ENCODE measurements at regions of chr3 and their contacts with region 1.

Region 1: GRCh38 chr3:4850928-4851265 is 128.3 kb upstream of the BHLHE40 start:
- DNase-seq: peak in 1 of 2 donors; percentile 84
- ATAC-seq: peak; percentile 82 to 86 (median 83)
- H3K4me3 ChIP-seq: no peak overlapping the region
- H3K4me3 Mint-ChIP-seq: peak overlapping the region; percentile 42
- H3K27ac ChIP-seq: peak overlapping the region; percentile 98
- H3K27ac Mint-ChIP-seq: peak overlapping the region; percentile 79 to 96
- H3K4me1 ChIP-seq: peaks cover 39% of the 10 kb centered on the region
- H3K4me1 Mint-ChIP-seq: peaks cover 72 to 75% of the 10 kb centered on the region in 2 donors
- H3K27me3 ChIP-seq: no peaks in the 10 kb centered on the region
- H3K27me3 Mint-ChIP-seq: no peaks in the 10 kb centered on the region
- CTCF ChIP-seq: no peak

Region 2: DNA sequence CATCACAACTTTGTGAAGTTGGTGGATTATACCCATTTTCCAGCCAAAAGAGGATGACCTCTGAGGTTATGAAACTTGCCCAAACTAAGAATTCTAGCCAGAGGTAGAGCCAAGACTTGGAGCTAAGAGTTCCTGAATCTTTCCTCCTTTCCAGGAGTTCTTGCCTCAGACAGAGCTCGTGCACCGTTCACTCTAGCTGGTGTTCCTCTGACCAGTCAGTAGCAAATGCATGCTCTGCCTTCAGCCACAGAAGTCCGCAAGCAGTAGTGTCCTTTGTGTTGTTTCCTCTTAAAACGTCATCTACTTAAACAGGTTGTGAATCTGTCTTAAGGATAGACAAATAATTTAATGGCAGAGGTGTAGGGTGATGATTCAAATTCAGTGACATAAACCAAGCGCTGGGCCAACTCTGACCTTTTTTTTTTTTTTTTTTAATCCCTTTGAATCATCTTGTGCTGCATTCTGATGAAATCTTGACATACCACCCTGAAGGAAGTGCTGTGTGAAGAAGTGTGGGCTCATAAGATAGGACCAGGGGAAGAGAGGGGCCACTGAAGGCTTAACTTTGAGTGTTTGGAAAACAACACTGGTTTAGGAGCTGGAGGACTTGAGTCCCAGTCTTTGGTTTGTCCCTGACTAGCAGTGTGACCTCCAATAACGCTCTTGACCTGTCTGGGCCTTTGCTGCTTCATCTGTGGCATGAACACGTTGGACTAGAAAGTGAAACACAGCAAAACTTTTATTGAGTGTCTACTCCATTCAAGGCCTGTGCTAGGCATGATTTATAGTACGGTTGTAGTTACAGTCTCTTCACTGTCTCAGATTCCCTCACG is 304.3 kb before region 1 on chr3:
- intact Hi-C with region 1: no loop called
- DNase-seq: no peak
- ATAC-seq: no peak
- H3K4me3 ChIP-seq: no peak overlapping the region
- H3K4me3 Mint-ChIP-seq: no peak overlapping the region
- H3K27ac ChIP-seq: no peak overlapping the region
- H3K27ac Mint-ChIP-seq: no peak overlapping the region
- H3K4me1 ChIP-seq: no peaks in the 10 kb centered on the region
- H3K4me1 Mint-ChIP-seq: peaks cover 28 to 31% of the 10 kb centered on the region in 2 donors
- H3K27me3 ChIP-seq: no peaks in the 10 kb centered on the region
- H3K27me3 Mint-ChIP-seq: no peaks in the 10 kb centered on the region
- CTCF ChIP-seq: no peak

Region 3: GRCh38 chr3:4821975-4822374 is 28.9 kb before region 1 on chr3:
- intact Hi-C with region 1: loop called (anchors 1 kb)
- DNase-seq: peak; percentile 71 to 95
- ATAC-seq: peak; percentile 88 to 97 (median 93)
- H3K4me3 ChIP-seq: no peak overlapping the region
- H3K4me3 Mint-ChIP-seq: peak overlapping the region; percentile 76
- H3K27ac ChIP-seq: peak overlapping the region; percentile 58
- H3K27ac Mint-ChIP-seq: peak overlapping the region; percentile 59 to 97
- H3K4me1 ChIP-seq: peaks cover 47% of the 10 kb centered on the region
- H3K4me1 Mint-ChIP-seq: peaks cover 51 to 69% of the 10 kb centered on the region in 2 donors
- H3K27me3 ChIP-seq: no peaks in the 10 kb centered on the region
- H3K27me3 Mint-ChIP-seq: no peaks in the 10 kb centered on the region
- CTCF ChIP-seq: no peak

Region 4: DNA sequence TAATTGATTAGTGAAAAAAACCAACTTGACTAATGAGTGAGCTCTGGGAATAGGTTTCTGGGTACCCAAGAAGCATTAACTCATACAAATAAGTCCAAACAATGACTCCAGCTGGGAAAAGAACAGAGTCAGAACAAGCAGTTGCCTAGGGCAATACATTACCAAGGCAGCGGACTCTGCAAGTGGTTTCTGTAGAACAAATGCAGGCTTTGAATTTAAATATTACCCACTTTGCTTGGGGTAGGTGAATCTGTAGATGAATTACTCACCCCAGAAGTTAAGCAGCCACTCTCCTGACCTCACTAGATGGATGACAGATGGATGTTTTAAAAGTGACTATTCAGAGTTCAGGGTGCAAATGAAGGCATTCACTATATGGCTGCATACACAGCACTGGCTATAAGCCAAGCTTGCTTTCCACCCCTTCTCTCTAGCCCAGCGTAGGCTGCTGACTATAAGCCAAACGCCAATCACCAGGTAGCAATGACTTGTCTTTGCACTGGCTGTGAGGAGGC is 55.3 kb after region 1 on chr3:
- intact Hi-C with region 1: loop called (anchors 1 kb)
- DNase-seq: no peak
- ATAC-seq: peak in 1 of 3 donors; percentile 27
- H3K4me3 ChIP-seq: no peak overlapping the region
- H3K4me3 Mint-ChIP-seq: peak overlapping the region; percentile 85
- H3K27ac ChIP-seq: no peak overlapping the region
- H3K27ac Mint-ChIP-seq: peak overlapping the region; percentile 90 to 95
- H3K4me1 ChIP-seq: peaks cover 35% of the 10 kb centered on the region
- H3K4me1 Mint-ChIP-seq: peaks cover 52 to 65% of the 10 kb centered on the region in 2 donors
- H3K27me3 ChIP-seq: no peaks in the 10 kb centered on the region
- H3K27me3 Mint-ChIP-seq: no peaks in the 10 kb centered on the region
- CTCF ChIP-seq: no peak

Measured in natural killer cell (primary cell).